MCF 10A (cell line): ENCODE measurements at regions of chr5 and their contacts with region 1.

Region 1: GRCh38 chr5:43040287-43041098 is at the start of gene ANXA2R:
- DNase-seq: no peak
- H3K4me3 Mint-ChIP-seq: peak within 1 kb of the TSS; percentile 88
- H3K27ac Mint-ChIP-seq: peak within 1 kb of the TSS; percentile 95
- H3K4me1 Mint-ChIP-seq: no peaks in the 10 kb centered on the region
- H3K27me3 Mint-ChIP-seq: no peaks in the 10 kb centered on the region
- CTCF ChIP-seq: no peak
- total RNA-seq, gene ANXA2R: 0.98 and 1.3 TPM in 2 replicates

Region 2: GRCh38 chr5:42612750-42613366 is 427.6 kb before region 1 on chr5:
- CTCF ChIA-PET with region 1: no interaction called
- POLR2A ChIA-PET with region 1: no interaction called
- intact Hi-C with region 1: no loop called
- DNase-seq: peak; percentile 71
- H3K4me3 Mint-ChIP-seq: no peak overlapping the region
- H3K27ac Mint-ChIP-seq: no peak overlapping the region
- H3K4me1 Mint-ChIP-seq: peaks cover 19% of the 10 kb centered on the region
- H3K27me3 Mint-ChIP-seq: no peaks in the 10 kb centered on the region
- CTCF ChIP-seq: no peak

Region 3: DNA sequence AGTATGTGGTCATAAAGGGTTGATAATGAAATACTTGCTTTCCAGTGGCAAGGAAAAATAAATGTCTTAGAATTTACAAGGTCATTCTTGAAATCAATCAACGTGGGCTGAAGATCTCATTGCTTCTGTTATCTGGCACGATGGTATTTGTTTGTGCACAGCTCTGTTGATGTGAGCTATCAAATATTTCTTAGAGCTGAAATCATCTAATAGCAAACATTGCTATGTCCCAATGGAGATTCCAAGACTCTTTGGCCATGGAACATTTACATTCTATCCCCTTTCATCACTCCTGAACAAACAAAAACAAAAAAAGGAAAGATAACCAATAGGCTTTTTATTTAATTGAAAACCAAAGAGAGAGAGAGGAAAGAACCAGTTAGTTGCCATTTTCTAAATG is 395.4 kb before region 1 on chr5:
- CTCF ChIA-PET with region 1: no interaction called
- POLR2A ChIA-PET with region 1: no interaction called
- intact Hi-C with region 1: no loop called
- DNase-seq: no peak
- H3K4me3 Mint-ChIP-seq: no peak overlapping the region
- H3K27ac Mint-ChIP-seq: no peak overlapping the region
- H3K4me1 Mint-ChIP-seq: peaks cover 6% of the 10 kb centered on the region
- H3K27me3 Mint-ChIP-seq: no peaks in the 10 kb centered on the region
- CTCF ChIP-seq: no peak

Region 4: GRCh38 chr5:42950440-42951292 is 89.8 kb before region 1 on chr5:
- CTCF ChIA-PET with region 1: interaction called, 5 read pairs
- POLR2A ChIA-PET with region 1: interaction called, 17 read pairs
- intact Hi-C with region 1: loop called (anchors 2 kb)
- DNase-seq: peak; percentile 98
- H3K4me3 Mint-ChIP-seq: peak overlapping the region; percentile 47
- H3K27ac Mint-ChIP-seq: peak overlapping the region; percentile 85
- H3K4me1 Mint-ChIP-seq: no peaks in the 10 kb centered on the region
- H3K27me3 Mint-ChIP-seq: no peaks in the 10 kb centered on the region
- CTCF ChIP-seq: no peak

Region 5: GRCh38 chr5:43066799-43067741 is 26.6 kb after region 1 on chr5:
- CTCF ChIA-PET with region 1: interaction called, 7 read pairs
- POLR2A ChIA-PET with region 1: interaction called, 181 read pairs
- intact Hi-C with region 1: loop called (anchors 1 kb)
- DNase-seq: peak; percentile 91
- H3K4me3 Mint-ChIP-seq: peak overlapping the region; percentile 99
- H3K27ac Mint-ChIP-seq: peak overlapping the region; percentile 93
- H3K4me1 Mint-ChIP-seq: peaks cover 12% of the 10 kb centered on the region
- H3K27me3 Mint-ChIP-seq: no peaks in the 10 kb centered on the region
- CTCF ChIP-seq: no peak